Activated naive CD4-positive, alpha-beta T cell treated with anti-CD3 and anti-CD28 coated beads for 36 hours (primary cell): ENCODE measurements at regions of chr2 and their contacts with region 1.

Region 1: DNA sequence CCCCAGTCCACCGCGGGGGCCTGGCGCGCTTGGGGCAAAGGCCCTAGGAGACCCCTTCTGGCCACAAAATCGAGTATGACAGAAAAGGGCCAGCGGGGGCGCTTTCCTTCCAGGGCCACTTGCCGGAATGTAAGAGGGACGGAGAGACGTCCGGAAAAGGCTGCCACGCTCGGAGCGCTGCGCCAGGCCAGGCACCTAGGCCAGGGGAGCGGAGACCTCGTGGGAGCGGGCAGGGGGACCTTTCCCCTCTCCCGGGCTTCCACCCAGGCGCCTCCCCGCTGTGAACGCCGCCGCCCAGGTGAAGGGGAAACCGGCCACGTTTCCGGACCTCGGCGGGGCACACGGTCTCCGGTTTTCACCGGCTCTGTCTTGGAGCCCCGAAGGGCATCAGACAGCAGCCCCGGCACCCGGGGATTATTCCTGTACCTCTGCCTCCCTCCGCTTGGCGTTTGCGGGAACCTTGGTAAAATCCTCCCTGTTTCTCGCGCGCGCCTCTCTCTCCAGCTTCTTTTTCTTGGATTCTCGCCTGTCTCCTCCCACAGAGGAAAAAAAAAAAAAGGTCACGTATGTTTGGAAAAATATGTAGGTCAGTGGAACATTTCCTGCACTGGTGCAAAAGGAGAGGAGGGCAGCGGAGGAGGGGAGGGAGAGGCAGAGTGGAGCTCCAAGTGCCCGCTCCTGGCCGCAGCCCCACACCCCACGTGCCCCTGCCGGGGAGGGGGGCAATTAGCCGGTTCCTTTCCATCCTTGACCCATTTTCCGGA is 1.2 kb upstream of the NPAS2 start:
- DNase-seq: peak; percentile 39
- H3K4me3 Mint-ChIP-seq: peak overlapping the region; percentile 70
- H3K27ac Mint-ChIP-seq: no peak overlapping the region
- H3K4me1 Mint-ChIP-seq: peaks cover 26% of the 10 kb centered on the region
- H3K27me3 Mint-ChIP-seq: peaks cover 15% of the 10 kb centered on the region

Region 2: GRCh38 chr2:100786297-100786658 is 32.5 kb before region 1 on chr2:
- CTCF ChIA-PET with region 1: no interaction called
- intact Hi-C with region 1: no loop called
- DNase-seq: no peak
- H3K4me3 Mint-ChIP-seq: no peak overlapping the region
- H3K27ac Mint-ChIP-seq: no peak overlapping the region
- H3K4me1 Mint-ChIP-seq: no peaks in the 10 kb centered on the region
- H3K27me3 Mint-ChIP-seq: no peaks in the 10 kb centered on the region

Region 3: DNA sequence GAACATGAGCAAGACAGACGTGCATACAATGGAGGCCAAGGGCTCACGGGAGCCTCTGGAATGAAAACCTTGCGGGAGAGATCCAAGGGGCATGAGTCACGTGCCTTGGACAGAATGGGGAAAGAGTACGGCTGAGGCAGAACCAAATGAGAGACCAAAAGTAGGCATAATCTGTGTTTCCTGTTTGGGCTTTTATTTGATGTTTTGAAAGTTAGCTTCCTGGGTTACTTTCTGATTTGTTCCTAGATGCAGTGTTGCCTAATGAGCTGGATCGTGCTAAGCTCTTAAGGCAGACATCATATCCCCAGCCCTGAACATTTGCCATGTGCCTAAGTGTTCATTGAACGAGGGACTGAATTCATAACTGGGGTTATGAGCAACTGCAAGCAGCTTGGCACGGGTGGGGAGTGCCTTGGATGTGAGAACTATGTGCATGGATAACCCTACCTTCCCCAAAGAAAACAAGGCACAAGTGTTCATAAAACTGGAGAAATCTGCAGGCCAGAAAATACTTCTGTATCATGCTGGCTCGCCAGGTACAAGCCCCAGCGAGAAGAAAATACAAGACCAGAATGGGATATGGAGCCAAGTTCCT is 123.0 kb after region 1 on chr2:
- CTCF ChIA-PET with region 1: no interaction called
- intact Hi-C with region 1: loop called (anchors 10 kb)
- DNase-seq: peak; percentile 30
- H3K4me3 Mint-ChIP-seq: peak overlapping the region; percentile 55
- H3K27ac Mint-ChIP-seq: peak overlapping the region; percentile 86
- H3K4me1 Mint-ChIP-seq: peaks cover 31% of the 10 kb centered on the region
- H3K27me3 Mint-ChIP-seq: no peaks in the 10 kb centered on the region

Region 4: DNA sequence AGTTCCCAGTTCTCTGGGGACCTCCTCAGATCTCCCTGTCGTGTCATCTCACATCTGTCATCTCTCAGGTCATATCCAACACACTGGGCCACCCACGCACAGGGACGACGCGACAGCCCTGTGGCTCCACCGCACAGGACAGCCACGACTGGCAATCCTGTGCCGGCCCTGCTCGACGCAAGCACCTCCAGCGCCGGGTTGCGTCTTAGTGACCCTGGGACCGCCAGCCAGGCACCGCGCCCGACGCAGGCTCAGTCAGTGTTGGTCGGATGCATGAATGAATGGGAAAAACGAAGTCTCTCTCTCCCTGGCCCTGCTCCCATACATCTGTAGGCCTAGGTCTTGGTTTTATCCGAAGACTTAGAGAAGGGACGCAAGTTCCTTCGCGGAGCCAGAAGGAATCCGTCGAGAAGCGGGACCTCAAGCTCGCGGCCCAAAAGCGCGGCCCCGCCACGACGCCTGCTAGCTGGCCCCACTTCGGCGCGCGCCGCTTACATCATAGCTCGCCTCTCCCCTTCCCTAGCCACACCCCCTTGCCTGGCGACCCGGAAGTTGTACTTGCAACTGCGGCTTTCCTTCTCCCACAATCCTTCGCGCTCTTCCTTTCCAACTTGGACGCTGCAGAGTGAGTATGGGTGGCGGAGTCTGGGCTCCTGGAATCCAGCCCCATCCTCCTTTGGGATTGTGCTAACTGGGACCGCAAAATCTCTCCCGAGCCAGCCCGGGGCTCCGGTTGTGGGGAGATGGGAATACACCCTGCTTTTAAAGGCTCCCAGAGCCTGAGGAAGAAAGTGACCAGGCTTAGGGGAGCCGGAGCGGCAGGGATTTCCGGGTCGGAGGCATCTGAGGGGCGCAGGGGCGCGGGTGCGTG is 183.1 kb after region 1 on chr2 and contains the start of gene RPL31:
- CTCF ChIA-PET with region 1: no interaction called
- intact Hi-C with region 1: loop called (anchors 1 kb)
- DNase-seq: peak; percentile 99
- H3K4me3 Mint-ChIP-seq: peak within 1 kb of the TSS; percentile 99
- H3K27ac Mint-ChIP-seq: peak within 1 kb of the TSS; percentile 94
- H3K4me1 Mint-ChIP-seq: peaks cover 46% of the 10 kb centered on the region
- H3K27me3 Mint-ChIP-seq: no peaks in the 10 kb centered on the region
- total RNA-seq, gene RPL31: 2,225 to 2,255 TPM